Posterior vena cava (tissue), 2 donors: ENCODE measurements at regions of chr6 and their contacts with region 1.

Region 1: GRCh38 chr6:69086689-69087088 is 451.6 kb downstream of the ADGRB3 start:
- DNase-seq: no peak

Region 2: DNA sequence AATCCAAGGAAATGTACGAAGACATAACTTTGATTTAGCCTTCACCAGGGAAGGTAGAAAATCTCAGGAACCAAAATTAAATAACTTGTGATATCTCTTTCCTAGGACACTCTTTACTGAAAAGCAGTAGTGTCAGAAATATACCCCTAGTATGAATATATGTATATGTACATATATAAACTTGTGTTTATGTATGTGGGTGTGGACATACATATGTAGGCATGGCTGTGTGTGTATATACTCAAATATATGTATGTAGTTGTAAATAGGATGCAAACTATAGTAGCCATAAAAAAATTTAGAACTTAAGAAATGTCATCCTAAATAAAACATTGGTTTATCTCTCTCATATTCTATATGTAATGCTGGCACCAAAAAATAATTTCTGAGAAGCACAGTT is 49.2 kb after region 1 on chr6:
- intact Hi-C with region 1: loop called in 1 of 2 experiments (anchors 2 kb)
- DNase-seq: no peak